ENCODE measurements at regions of chr3 and their contacts with region 1.

Region 1: DNA sequence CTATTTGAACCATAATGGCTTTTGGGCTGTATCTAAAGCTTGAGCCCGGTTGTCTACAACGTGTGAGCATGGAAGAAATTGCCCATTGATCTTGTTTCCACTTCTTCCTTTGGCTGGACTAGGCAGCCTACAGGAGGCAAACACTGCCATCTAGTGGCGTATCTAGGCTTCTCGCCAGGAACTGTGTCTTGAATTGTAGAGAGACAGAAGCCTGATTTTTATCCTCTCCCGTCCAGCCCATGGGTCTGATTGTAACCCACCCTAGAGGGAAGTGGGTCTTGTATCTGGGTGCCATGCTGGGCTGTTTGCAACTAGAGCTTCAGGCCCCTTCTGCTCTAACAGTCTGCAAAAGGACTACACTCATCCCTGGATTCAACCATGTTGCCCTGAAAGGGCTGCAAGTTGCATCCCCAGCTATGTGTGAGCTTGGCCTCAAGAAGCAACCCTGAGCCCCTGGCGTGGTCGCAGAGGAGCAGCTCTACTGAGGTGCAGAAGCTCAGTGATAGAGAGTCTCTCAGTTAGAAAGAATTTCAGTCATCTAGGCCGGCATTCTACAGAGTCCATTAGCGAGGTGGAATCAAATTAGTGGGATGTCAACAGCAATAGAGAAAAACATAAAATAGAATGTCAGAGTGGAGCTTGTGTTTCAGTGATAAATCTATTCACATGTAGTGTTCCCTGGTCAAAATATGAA is 170.2 kb upstream of the UMPS start:
- DNase-seq: peak; percentile 63
- H3K4me3 ChIP-seq: no peak overlapping the region
- H3K27ac ChIP-seq: no peak overlapping the region
- H3K4me1 ChIP-seq: no peaks in the 10 kb centered on the region
- H3K27me3 ChIP-seq: no peaks in the 10 kb centered on the region
- CTCF ChIP-seq: peak; percentile 49 to 80 (median 72)
- POLR2A ChIP-seq: no peak

Region 2: GRCh38 chr3:122996038-122996580 is 1563.9 kb before region 1 on chr3:
- intact Hi-C with region 1: no loop called
- DNase-seq: no peak
- H3K4me3 ChIP-seq: no peak overlapping the region
- H3K27ac ChIP-seq: no peak overlapping the region
- H3K4me1 ChIP-seq: no peaks in the 10 kb centered on the region
- H3K27me3 ChIP-seq: peaks cover 5% of the 10 kb centered on the region
- CTCF ChIP-seq: no peak
- POLR2A ChIP-seq: no peak

Region 3: DNA sequence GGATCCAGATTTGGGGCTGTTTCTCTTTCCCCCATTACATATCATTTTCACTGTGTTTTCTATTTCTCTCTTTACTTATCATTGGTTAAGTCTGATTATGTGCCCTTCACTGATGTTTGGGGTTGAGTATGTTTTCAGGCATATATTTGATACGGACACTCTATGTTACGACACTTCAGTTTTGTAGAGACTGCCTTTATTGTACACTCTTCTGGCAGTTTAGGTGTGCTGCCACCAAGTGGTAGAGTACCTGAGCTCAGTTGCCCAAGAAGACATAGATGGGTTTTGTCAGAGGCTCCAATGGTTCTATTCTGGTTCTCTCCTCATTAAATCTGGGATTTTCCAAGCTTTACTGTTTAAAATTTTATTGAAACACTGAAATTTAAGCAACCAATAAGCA is 313.1 kb before region 1 on chr3:
- intact Hi-C with region 1: no loop called
- DNase-seq: no peak
- H3K4me3 ChIP-seq: no peak overlapping the region
- H3K27ac ChIP-seq: no peak overlapping the region
- H3K4me1 ChIP-seq: no peaks in the 10 kb centered on the region
- H3K27me3 ChIP-seq: no peaks in the 10 kb centered on the region
- CTCF ChIP-seq: no peak
- POLR2A ChIP-seq: no peak

Region 4: GRCh38 chr3:124281453-124282316 is 278.3 kb before region 1 on chr3:
- intact Hi-C with region 1: loop called (anchors 10 kb)
- DNase-seq: no peak
- H3K4me3 ChIP-seq: no peak overlapping the region
- H3K27ac ChIP-seq: no peak overlapping the region
- H3K4me1 ChIP-seq: no peaks in the 10 kb centered on the region
- H3K27me3 ChIP-seq: no peaks in the 10 kb centered on the region
- CTCF ChIP-seq: peak in 2 of 4 experiments; percentile 41 to 43
- POLR2A ChIP-seq: no peak

Region 5: GRCh38 chr3:124351430-124352148 is 208.4 kb before region 1 on chr3:
- intact Hi-C with region 1: loop called (anchors 5 kb)
- DNase-seq: peak; percentile 19
- H3K4me3 ChIP-seq: no peak overlapping the region
- H3K27ac ChIP-seq: no peak overlapping the region
- H3K4me1 ChIP-seq: no peaks in the 10 kb centered on the region
- H3K27me3 ChIP-seq: no peaks in the 10 kb centered on the region
- CTCF ChIP-seq: peak; percentile 23 to 73 (median 63)
- POLR2A ChIP-seq: no peak

Region 6: DNA sequence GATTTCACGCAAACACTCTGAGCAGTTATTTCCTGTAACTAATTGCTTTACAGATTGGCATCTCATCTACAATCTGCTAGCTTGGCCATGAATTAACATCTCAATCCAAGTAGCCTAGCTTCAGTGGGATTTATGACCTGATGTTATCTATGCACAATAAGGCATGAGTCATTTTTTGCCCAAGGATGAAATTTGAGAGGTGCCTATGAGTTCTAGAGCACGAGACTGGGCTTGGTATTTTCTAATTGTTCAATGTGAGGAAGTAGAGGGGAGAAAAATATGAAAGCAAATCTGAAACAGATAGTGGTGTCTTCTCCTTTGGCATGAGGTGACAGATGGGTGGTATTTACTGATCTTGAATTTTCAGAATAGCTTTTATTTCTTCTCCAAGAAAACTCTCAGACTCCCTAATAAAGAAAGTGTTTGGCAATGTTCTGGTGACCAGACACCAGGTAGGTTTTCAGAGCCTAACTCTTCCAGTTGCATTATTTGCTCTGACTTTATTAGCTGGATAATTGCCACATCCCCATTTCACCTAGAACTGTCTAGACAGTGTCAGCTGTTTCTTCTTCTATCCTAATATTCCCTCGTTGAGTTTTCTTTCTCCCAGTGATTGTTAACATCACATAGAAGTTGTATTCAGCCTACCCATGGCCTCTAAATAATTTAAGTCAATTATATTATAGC is 130.8 kb before region 1 on chr3:
- intact Hi-C with region 1: no loop called
- DNase-seq: peak; percentile 7
- H3K4me3 ChIP-seq: no peak overlapping the region
- H3K27ac ChIP-seq: no peak overlapping the region
- H3K4me1 ChIP-seq: no peaks in the 10 kb centered on the region
- H3K27me3 ChIP-seq: no peaks in the 10 kb centered on the region
- CTCF ChIP-seq: no peak
- POLR2A ChIP-seq: no peak

Region 7: GRCh38 chr3:124514683-124515082 is 45.3 kb before region 1 on chr3:
- intact Hi-C with region 1: loop called (anchors 5 kb)
- DNase-seq: no peak
- H3K4me3 ChIP-seq: no peak overlapping the region
- H3K27ac ChIP-seq: no peak overlapping the region
- H3K4me1 ChIP-seq: no peaks in the 10 kb centered on the region
- H3K27me3 ChIP-seq: peaks cover 13% of the 10 kb centered on the region
- CTCF ChIP-seq: no peak
- POLR2A ChIP-seq: no peak

Region 8: DNA sequence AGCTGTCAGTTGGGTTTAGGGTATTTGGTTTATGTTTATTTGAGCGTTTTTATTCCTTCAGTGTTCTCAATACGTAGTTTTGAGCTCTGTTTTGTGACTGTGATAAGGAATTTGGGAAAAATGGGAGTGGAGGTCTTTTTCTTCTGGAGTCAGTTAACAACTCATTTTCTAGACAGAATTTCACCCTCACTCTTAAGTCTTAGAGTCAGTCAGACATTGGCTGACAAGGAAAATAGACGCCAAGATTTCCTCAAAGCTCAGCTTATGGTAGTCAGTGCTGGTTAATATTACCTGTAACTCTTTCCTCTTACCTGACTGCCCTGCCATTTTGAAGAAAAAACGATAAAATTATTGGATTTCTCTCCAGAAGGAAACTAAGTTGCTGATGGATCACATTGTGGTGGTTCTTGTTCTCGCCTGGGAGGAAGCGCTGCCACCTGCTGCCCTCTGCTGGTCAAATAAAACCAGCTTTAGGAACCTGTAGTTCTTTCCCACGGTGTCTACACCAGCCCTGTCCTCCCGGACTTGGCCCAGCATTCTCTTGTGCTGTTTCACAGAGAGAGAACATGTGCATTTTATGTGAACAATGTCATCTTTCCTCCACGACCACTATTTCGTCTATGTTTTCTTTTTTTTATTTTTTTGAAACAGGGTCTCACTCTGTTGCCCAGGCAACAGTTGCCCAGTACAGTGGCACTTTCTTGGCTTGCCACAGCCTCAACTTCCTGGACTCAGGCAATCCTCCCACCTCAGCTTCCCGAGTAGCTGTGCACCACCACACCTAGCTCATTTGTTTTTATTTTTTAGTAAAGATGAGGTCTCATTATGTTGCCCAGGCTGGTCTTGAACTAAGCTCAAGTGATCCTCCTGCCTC is 128.8 kb after region 1 on chr3:
- intact Hi-C with region 1: loop called (anchors 1 kb)
- DNase-seq: peak; percentile 75
- H3K4me3 ChIP-seq: no peak overlapping the region
- H3K27ac ChIP-seq: no peak overlapping the region
- H3K4me1 ChIP-seq: no peaks in the 10 kb centered on the region
- H3K27me3 ChIP-seq: no peaks in the 10 kb centered on the region
- CTCF ChIP-seq: peak; percentile 65 to 84 (median 82)
- POLR2A ChIP-seq: no peak

Region 9: DNA sequence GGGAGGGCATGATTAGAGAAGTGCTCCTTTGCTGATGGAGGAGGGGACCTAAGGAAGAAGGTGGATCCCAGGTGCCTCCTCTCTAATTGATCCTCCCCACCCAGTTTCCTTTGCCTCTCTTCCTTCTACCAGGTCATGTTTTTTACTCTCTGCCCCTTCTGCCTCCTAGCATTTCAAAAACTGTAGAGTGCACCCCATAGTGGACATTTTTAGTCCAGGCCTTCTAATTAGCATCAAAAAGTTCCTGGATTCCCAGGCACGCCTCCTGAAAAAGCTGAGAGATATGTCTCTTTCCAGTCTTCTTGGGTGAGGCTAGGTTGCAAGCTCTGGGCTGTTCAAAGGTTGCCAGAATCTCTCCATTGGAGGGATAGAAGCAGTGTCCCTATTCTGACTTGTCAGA is 345.8 kb after region 1 on chr3:
- intact Hi-C with region 1: loop called (anchors 10 kb)
- DNase-seq: no peak
- H3K4me3 ChIP-seq: no peak overlapping the region
- H3K27ac ChIP-seq: no peak overlapping the region
- H3K4me1 ChIP-seq: no peaks in the 10 kb centered on the region
- H3K27me3 ChIP-seq: no peaks in the 10 kb centered on the region
- CTCF ChIP-seq: no peak
- POLR2A ChIP-seq: no peak

Measured in prostate gland (tissue), 2 donors.